Activated naive CD4-positive, alpha-beta T cell treated with anti-CD3 and anti-CD28 coated beads for 36 hours (primary cell): ENCODE measurements at regions of chr9 and their contacts with region 1.

Region 1: DNA sequence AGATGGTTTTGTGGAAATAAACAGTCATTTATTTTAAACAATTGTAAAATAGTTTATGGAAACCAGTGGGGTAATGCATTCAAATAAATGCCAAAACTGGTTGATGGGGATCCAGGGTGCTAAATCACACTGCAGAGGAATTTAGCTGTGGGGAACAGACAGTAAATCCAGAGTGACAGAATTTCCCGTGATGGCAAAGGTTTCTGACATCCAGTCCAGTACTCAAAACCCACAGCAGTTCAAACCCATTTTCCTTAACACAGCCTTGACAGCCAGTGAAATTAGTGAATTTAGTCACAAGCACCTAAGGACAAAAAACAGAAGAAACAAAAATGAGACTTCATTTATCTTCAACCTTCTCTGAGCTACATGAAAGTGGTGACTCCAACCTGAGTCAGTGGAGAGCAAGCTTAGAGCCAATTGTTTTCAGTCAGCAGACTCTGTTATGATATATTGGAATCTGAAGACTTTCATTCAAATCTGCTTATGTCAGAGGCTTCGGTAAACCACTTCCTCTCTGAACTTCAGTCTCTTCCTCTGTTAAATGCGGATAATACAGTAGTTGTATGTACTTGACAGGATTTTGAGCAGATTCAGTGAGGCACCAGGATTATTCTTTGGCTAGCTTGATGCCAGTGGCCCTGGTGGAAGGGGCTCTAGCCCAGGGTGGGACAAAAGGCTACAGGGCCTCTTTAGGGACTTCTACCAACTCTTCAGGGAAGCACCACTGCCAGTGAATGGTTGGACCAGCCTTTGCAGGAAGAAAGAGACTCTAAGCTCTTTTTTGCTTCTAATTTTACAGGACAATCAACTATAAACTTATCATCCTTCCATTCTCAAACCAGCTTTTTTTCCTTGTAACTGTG is 185.3 kb downstream of the MAPKAP1 start:
- DNase-seq: peak; percentile 71
- H3K4me3 Mint-ChIP-seq: peak overlapping the region; percentile 23
- H3K27ac Mint-ChIP-seq: peak overlapping the region; percentile 86
- H3K4me1 Mint-ChIP-seq: peaks cover 46% of the 10 kb centered on the region
- H3K27me3 Mint-ChIP-seq: no peaks in the 10 kb centered on the region

Region 2: GRCh38 chr9:124202447-124202971 is 1319.2 kb before region 1 on chr9:
- CTCF ChIA-PET with region 1: no interaction called
- intact Hi-C with region 1: loop called (anchors 10 kb)
- DNase-seq: peak; percentile 94
- H3K4me3 Mint-ChIP-seq: peak overlapping the region; percentile 25
- H3K27ac Mint-ChIP-seq: peak overlapping the region; percentile 84
- H3K4me1 Mint-ChIP-seq: peaks cover 32% of the 10 kb centered on the region
- H3K27me3 Mint-ChIP-seq: no peaks in the 10 kb centered on the region

Region 3: DNA sequence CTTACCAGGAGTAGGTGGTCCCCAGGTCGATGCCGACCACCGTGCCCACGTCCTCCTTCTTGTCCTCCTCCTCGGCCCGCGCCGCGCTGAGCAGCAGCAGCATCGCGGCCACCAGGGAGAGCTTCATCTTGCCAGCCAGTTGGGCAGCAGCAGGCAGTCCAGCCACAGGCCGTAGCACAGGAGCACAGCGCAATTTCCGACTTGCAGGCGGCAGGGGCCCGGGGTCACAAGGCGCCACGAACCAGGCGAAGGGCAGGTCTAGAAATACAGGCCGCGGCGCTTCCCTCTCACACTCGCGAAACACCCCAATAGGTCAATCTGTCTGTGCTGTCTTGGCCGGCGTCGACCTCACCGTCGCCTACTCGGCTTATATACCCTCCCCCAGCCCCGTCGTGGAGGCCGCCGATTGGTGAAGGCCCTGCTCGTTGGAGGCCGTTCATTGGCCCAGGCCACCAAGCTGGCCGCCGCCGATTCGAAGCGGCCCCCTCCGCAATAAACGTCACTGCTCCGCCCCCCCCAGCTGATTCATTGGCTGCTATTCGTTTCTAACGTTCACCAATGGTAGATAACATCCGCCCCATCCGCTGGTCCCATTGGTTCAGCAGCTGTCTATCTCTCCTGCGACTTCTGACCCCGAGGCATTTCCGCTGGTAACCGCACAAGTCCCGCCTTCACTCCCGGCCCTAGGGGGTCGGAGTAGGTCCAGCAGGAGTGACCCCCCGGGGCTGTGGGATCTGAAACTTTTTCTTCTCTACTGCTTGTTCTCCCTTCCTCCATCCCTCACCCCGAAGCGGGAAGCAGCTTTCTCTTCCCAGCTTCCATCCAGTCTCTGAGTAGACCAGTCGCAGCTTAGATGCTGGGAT is 280.5 kb before region 1 on chr9 and contains the start of gene HSPA5:
- CTCF ChIA-PET with region 1: no interaction called
- intact Hi-C with region 1: loop called (anchors 5 kb)
- DNase-seq: peak; percentile 100
- H3K4me3 Mint-ChIP-seq: peak within 1 kb of the TSS; percentile 95
- H3K27ac Mint-ChIP-seq: peak within 1 kb of the TSS; percentile 99
- H3K4me1 Mint-ChIP-seq: peaks cover 44% of the 10 kb centered on the region
- H3K27me3 Mint-ChIP-seq: peaks cover 2% of the 10 kb centered on the region
- total RNA-seq, gene HSPA5: 136 to 138 TPM

Region 4: DNA sequence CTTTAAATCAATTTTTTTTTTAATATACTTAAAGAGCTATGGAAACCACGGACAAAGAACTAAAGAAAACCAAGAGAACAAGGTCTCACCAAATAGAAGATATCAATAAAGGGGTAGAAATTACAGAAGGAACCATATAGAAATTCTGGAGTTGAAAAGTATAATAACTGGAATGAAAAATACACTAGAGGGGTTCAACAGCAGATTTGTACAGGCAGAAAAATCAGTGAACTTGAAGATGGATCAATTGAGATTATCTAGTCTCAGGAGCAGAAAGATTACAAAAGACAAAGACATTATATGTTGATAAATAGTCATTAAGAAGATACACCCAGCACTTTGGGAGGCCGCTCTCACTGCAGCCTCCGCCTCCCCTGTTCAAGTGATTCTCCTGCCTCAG is 204.0 kb before region 1 on chr9:
- CTCF ChIA-PET with region 1: no interaction called
- intact Hi-C with region 1: no loop called
- DNase-seq: no peak
- H3K4me3 Mint-ChIP-seq: no peak overlapping the region
- H3K27ac Mint-ChIP-seq: no peak overlapping the region
- H3K4me1 Mint-ChIP-seq: no peaks in the 10 kb centered on the region
- H3K27me3 Mint-ChIP-seq: no peaks in the 10 kb centered on the region

Region 5: GRCh38 chr9:125700791-125701190 is 179.1 kb after region 1 on chr9:
- CTCF ChIA-PET with region 1: interaction called, 3 read pairs
- intact Hi-C with region 1: loop called (anchors 2 kb)
- DNase-seq: peak; percentile 80
- H3K4me3 Mint-ChIP-seq: no peak overlapping the region
- H3K27ac Mint-ChIP-seq: peak overlapping the region; percentile 47
- H3K4me1 Mint-ChIP-seq: peaks cover 58% of the 10 kb centered on the region
- H3K27me3 Mint-ChIP-seq: no peaks in the 10 kb centered on the region

Region 6: GRCh38 chr9:125746017-125746773 is 224.5 kb after region 1 on chr9:
- CTCF ChIA-PET with region 1: no interaction called
- intact Hi-C with region 1: loop called (anchors 2 kb)
- DNase-seq: peak; percentile 93
- H3K4me3 Mint-ChIP-seq: peak overlapping the region; percentile 91
- H3K27ac Mint-ChIP-seq: peak overlapping the region; percentile 90
- H3K4me1 Mint-ChIP-seq: peaks cover 25% of the 10 kb centered on the region
- H3K27me3 Mint-ChIP-seq: peaks cover 6% of the 10 kb centered on the region

Region 7: GRCh38 chr9:126411225-126411947 is 889.7 kb after region 1 on chr9:
- CTCF ChIA-PET with region 1: no interaction called
- intact Hi-C with region 1: loop called (anchors 5 kb)
- DNase-seq: peak; percentile 68
- H3K4me3 Mint-ChIP-seq: peak overlapping the region; percentile 35
- H3K27ac Mint-ChIP-seq: peak overlapping the region; percentile 72
- H3K4me1 Mint-ChIP-seq: peaks cover 33% of the 10 kb centered on the region
- H3K27me3 Mint-ChIP-seq: no peaks in the 10 kb centered on the region